ENCODE measurements at regions of chr9 and their contacts with region 1.

Region 1: DNA sequence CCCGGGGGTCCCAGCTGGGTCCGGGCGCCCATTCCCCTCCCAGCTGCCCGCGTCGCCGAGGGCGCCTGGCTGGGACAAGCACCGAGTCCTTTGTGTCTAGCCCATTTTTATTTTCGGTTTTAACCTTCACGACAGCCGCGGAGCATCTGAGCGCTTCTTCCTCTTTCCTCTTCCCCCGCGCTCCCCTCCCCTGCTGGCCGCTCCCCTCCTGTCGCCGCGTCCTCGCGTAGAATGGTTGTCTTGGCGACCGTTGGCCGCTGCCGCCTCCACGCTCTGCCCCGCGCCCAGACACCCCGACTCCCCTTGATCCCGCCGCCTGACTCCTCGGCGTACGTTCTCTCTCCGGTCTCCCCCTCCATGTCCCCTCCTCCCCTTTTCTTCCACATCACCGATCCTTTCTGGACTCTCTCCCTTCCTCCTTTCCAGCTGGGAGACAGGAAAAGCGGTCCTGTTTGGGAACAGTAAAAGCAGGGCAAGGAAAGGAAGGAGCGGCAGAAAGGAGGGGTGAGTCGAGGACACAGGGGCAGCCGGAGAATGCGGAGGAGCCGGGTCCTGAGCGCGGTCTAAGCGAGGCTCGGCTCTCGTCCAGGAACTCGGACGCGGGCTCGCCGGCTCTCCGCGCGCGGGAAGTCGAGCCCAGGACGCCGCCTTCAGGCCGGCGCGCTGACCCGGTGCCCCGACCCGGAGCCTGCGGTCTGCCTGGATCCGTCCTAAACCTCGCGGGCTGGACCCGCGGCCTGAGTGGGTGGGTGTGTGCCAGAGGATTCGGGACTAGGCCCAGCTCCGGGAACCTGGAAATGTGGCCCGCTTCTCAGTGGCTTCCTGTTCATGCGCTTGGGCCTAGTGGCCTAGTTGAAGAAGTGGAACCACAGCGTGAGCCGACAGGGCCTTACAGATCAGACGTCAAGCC is 841 bp downstream of the CDKN2B-AS1 start:
- DNase-seq: peak; percentile 52 to 74 (median 69)
- ATAC-seq: peak; percentile 88
- H3K4me3 ChIP-seq: peak overlapping the region; percentile 93
- H3K4me3 Mint-ChIP-seq: peak overlapping the region; percentile 88 to 97 (median 94)
- H3K27ac ChIP-seq: peak overlapping the region; percentile 37
- H3K27ac Mint-ChIP-seq: peak overlapping the region; percentile 29 to 98 (median 56)
- H3K4me1 ChIP-seq: peaks cover 8 to 16% of the 10 kb centered on the region in 2 donors
- H3K4me1 Mint-ChIP-seq: peaks cover 0 to 32% (median 13%) of the 10 kb centered on the region in 7 donors
- H3K27me3 ChIP-seq: peaks cover 0 to 18% of the 10 kb centered on the region in 2 donors
- H3K27me3 Mint-ChIP-seq: peaks cover 22 to 54% (median 44%) of the 10 kb centered on the region in 5 donors

Region 2: GRCh38 chr9:21326526-21327139 is 668.8 kb before region 1 on chr9:
- CTCF ChIA-PET with region 1: no interaction called
- POLR2A ChIA-PET with region 1: no interaction called
- intact Hi-C with region 1: loop called (anchors 1 to 10 kb)
- DNase-seq: peak in 7 of 9 donors; percentile 31 to 67 (median 56)
- ATAC-seq: peak; percentile 95
- H3K4me3 ChIP-seq: no peak overlapping the region
- H3K4me3 Mint-ChIP-seq: peak overlapping the region in 4 of 10 donors; percentile 17 to 62 (median 40)
- H3K27ac ChIP-seq: no peak overlapping the region
- H3K27ac Mint-ChIP-seq: peak overlapping the region in 3 of 9 donors; percentile 17 to 73 (median 35)
- H3K4me1 ChIP-seq: peaks cover 10 to 23% of the 10 kb centered on the region in 2 donors
- H3K4me1 Mint-ChIP-seq: peaks cover 32 to 67% (median 55%) of the 10 kb centered on the region in 7 donors
- H3K27me3 ChIP-seq: no peaks in the 10 kb centered on the region
- H3K27me3 Mint-ChIP-seq: no peaks in the 10 kb centered on the region

Region 3: GRCh38 chr9:21576331-21577189 is 418.9 kb before region 1 on chr9:
- CTCF ChIA-PET with region 1: no interaction called
- POLR2A ChIA-PET with region 1: no interaction called
- intact Hi-C with region 1: loop called in 1 of 2 experiments (anchors 5 kb)
- DNase-seq: peak in 7 of 9 donors; percentile 44 to 80 (median 60)
- ATAC-seq: peak; percentile 69
- H3K4me3 ChIP-seq: no peak overlapping the region
- H3K4me3 Mint-ChIP-seq: peak overlapping the region; percentile 3 to 77 (median 58)
- H3K27ac ChIP-seq: peak overlapping the region; percentile 48
- H3K27ac Mint-ChIP-seq: peak overlapping the region; percentile 34 to 95 (median 87)
- H3K4me1 ChIP-seq: peaks cover 25 to 33% of the 10 kb centered on the region in 2 donors
- H3K4me1 Mint-ChIP-seq: peaks cover 23 to 51% (median 39%) of the 10 kb centered on the region in 7 donors
- H3K27me3 ChIP-seq: no peaks in the 10 kb centered on the region
- H3K27me3 Mint-ChIP-seq: peaks cover 0 to 34% (median 0%) of the 10 kb centered on the region in 5 donors

Region 4: GRCh38 chr9:21812946-21813568 is 182.4 kb before region 1 on chr9:
- CTCF ChIA-PET with region 1: no interaction called
- POLR2A ChIA-PET with region 1: no interaction called
- intact Hi-C with region 1: loop called in 1 of 2 experiments (anchors 1 kb)
- DNase-seq: peak; percentile 11 to 69 (median 50)
- ATAC-seq: peak; percentile 82
- H3K4me3 ChIP-seq: no peak overlapping the region
- H3K4me3 Mint-ChIP-seq: no peak overlapping the region
- H3K27ac ChIP-seq: no peak overlapping the region
- H3K27ac Mint-ChIP-seq: peak overlapping the region in 4 of 9 donors; percentile 6 to 81 (median 64)
- H3K4me1 ChIP-seq: peaks cover 7 to 12% of the 10 kb centered on the region in 2 donors
- H3K4me1 Mint-ChIP-seq: peaks cover 6 to 40% (median 17%) of the 10 kb centered on the region in 7 donors
- H3K27me3 ChIP-seq: no peaks in the 10 kb centered on the region
- H3K27me3 Mint-ChIP-seq: no peaks in the 10 kb centered on the region

Region 5: GRCh38 chr9:21965401-21965951 is 30.0 kb before region 1 on chr9:
- CTCF ChIA-PET with region 1: no interaction called
- POLR2A ChIA-PET with region 1: interaction called, 3 read pairs
- intact Hi-C with region 1: loop called in 1 of 2 experiments (anchors 1 kb)
- DNase-seq: peak in 1 of 9 donors; percentile 53
- ATAC-seq: peak; percentile 75
- H3K4me3 ChIP-seq: peak overlapping the region; percentile 33
- H3K4me3 Mint-ChIP-seq: peak overlapping the region in 9 of 10 donors; percentile 1 to 81 (median 57)
- H3K27ac ChIP-seq: no peak overlapping the region
- H3K27ac Mint-ChIP-seq: peak overlapping the region in 5 of 9 donors; percentile 1 to 78 (median 61)
- H3K4me1 ChIP-seq: peaks cover 10 to 18% of the 10 kb centered on the region in 2 donors
- H3K4me1 Mint-ChIP-seq: peaks cover 9 to 35% (median 25%) of the 10 kb centered on the region in 7 donors
- H3K27me3 ChIP-seq: peaks cover 56 to 66% of the 10 kb centered on the region in 2 donors
- H3K27me3 Mint-ChIP-seq: peaks cover 89 to 94% (median 94%) of the 10 kb centered on the region in 5 donors

Region 6: GRCh38 chr9:22008736-22009562 is 13.5 kb after region 1 on chr9 and contains the start of gene CDKN2B:
- CTCF ChIA-PET with region 1: interaction called, 5 read pairs
- POLR2A ChIA-PET with region 1: interaction called, 4 read pairs
- intact Hi-C with region 1: loop called (anchors 1 kb)
- DNase-seq: peak in 6 of 9 donors; percentile 30 to 82 (median 53)
- ATAC-seq: peak; percentile 90
- H3K4me3 ChIP-seq: peak within 1 kb of the TSS; percentile 57
- H3K4me3 Mint-ChIP-seq: peak within 1 kb of the TSS; percentile 46 to 86 (median 71)
- H3K27ac ChIP-seq: no peak within 1 kb of the TSS
- H3K27ac Mint-ChIP-seq: peak within 1 kb of the TSS in 2 of 9 donors; percentile 14 to 61
- H3K4me1 ChIP-seq: peaks cover 9 to 20% of the 10 kb centered on the region in 2 donors
- H3K4me1 Mint-ChIP-seq: peaks cover 17 to 32% (median 23%) of the 10 kb centered on the region in 7 donors
- H3K27me3 ChIP-seq: peaks cover 3 to 46% of the 10 kb centered on the region in 2 donors
- H3K27me3 Mint-ChIP-seq: peaks cover 67 to 84% (median 71%) of the 10 kb centered on the region in 5 donors
- total RNA-seq, gene CDKN2B: 0.32 to 4.1 (median 1.6) TPM in 3 of 5 experiments, not detected in the others

Region 7: GRCh38 chr9:22119537-22120158 is 124.2 kb after region 1 on chr9:
- CTCF ChIA-PET with region 1: no interaction called
- POLR2A ChIA-PET with region 1: no interaction called
- intact Hi-C with region 1: loop called in 1 of 2 experiments (anchors 1 kb)
- DNase-seq: peak in 3 of 9 donors; percentile 4 to 28 (median 27)
- ATAC-seq: peak; percentile 70
- H3K4me3 ChIP-seq: no peak overlapping the region
- H3K4me3 Mint-ChIP-seq: no peak overlapping the region
- H3K27ac ChIP-seq: no peak overlapping the region
- H3K27ac Mint-ChIP-seq: no peak overlapping the region
- H3K4me1 ChIP-seq: no peaks in the 10 kb centered on the region
- H3K4me1 Mint-ChIP-seq: peaks cover 0 to 20% (median 0%) of the 10 kb centered on the region in 7 donors
- H3K27me3 ChIP-seq: no peaks in the 10 kb centered on the region
- H3K27me3 Mint-ChIP-seq: peaks cover 5 to 71% (median 10%) of the 10 kb centered on the region in 5 donors